CD4-positive, alpha-beta memory T cell (primary cell): ENCODE measurements at regions of chr7 and their contacts with region 1.

Region 1: GRCh38 chr7:154913638-154914312 is 89.1 kb downstream of the PAXIP1 start:
- DNase-seq: peak; percentile 80 to 83 (median 80)
- H3K4me3 ChIP-seq: peak overlapping the region in 1 of 2 donors; percentile 29
- H3K4me3 Mint-ChIP-seq: peak overlapping the region; percentile 84 to 93 (median 88)
- H3K27ac ChIP-seq: no peak overlapping the region
- H3K27ac Mint-ChIP-seq: peak overlapping the region in 3 of 7 donors; percentile 74 to 83 (median 75)
- H3K4me1 ChIP-seq: peaks cover 5% of the 10 kb centered on the region
- H3K4me1 Mint-ChIP-seq: peaks cover 4 to 5% (median 4%) of the 10 kb centered on the region in 4 donors
- H3K27me3 ChIP-seq: no peaks in the 10 kb centered on the region
- H3K27me3 Mint-ChIP-seq: peaks cover 14 to 27% of the 10 kb centered on the region in 2 donors

Region 2: GRCh38 chr7:154903083-154903731 is 10.6 kb before region 1 on chr7:
- CTCF ChIA-PET with region 1: interaction called, 10 read pairs
- POLR2A ChIA-PET with region 1: no interaction called
- intact Hi-C with region 1: no loop called
- DNase-seq: no peak
- H3K4me3 ChIP-seq: no peak overlapping the region
- H3K4me3 Mint-ChIP-seq: no peak overlapping the region
- H3K27ac ChIP-seq: no peak overlapping the region
- H3K27ac Mint-ChIP-seq: no peak overlapping the region
- H3K4me1 ChIP-seq: no peaks in the 10 kb centered on the region
- H3K4me1 Mint-ChIP-seq: peaks cover 0 to 2% (median under 1%) of the 10 kb centered on the region in 4 donors
- H3K27me3 ChIP-seq: no peaks in the 10 kb centered on the region
- H3K27me3 Mint-ChIP-seq: peaks cover 0 to 4% of the 10 kb centered on the region in 2 donors

Region 3: DNA sequence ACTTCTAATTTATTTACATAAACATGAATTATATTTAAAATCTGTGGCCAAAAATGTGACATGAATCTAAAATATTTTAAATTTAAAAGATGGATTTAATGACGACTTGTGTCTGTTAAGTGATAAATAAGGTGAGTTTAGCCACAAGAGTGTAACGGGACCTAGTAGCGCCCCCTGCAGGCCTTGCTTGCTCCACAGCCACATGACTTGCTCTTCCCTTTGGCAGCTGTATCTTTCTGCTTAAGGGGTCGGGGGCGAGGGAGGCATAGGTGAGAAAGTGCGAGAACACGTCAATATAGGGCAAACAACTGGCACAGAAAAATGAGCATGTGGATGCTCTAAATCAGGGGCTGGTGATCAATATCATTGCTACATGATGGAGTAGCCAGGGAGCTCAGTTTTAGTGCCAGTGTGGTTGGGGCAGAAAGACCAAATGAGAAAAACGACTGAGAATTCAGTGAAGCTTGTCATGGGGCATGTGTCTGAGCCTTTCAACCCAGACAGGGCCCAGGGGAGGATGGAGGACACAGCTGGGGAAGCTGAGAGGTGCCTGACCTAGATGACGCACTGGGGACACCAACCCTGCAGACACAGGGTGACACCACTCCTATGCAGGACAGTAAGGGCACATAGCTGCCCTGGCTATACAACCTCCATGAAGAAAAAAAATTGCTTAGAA is 39.4 kb after region 1 on chr7:
- CTCF ChIA-PET with region 1: interaction called, 67 read pairs
- POLR2A ChIA-PET with region 1: interaction called, 4 read pairs
- intact Hi-C with region 1: loop called (anchors 1 kb)
- DNase-seq: peak; percentile 53 to 67 (median 59)
- H3K4me3 ChIP-seq: no peak overlapping the region
- H3K4me3 Mint-ChIP-seq: no peak overlapping the region
- H3K27ac ChIP-seq: no peak overlapping the region
- H3K27ac Mint-ChIP-seq: peak overlapping the region in 1 of 7 donors; percentile 60
- H3K4me1 ChIP-seq: no peaks in the 10 kb centered on the region
- H3K4me1 Mint-ChIP-seq: peaks cover 0 to 4% (median 1%) of the 10 kb centered on the region in 4 donors
- H3K27me3 ChIP-seq: no peaks in the 10 kb centered on the region
- H3K27me3 Mint-ChIP-seq: no peaks in the 10 kb centered on the region

Region 4: DNA sequence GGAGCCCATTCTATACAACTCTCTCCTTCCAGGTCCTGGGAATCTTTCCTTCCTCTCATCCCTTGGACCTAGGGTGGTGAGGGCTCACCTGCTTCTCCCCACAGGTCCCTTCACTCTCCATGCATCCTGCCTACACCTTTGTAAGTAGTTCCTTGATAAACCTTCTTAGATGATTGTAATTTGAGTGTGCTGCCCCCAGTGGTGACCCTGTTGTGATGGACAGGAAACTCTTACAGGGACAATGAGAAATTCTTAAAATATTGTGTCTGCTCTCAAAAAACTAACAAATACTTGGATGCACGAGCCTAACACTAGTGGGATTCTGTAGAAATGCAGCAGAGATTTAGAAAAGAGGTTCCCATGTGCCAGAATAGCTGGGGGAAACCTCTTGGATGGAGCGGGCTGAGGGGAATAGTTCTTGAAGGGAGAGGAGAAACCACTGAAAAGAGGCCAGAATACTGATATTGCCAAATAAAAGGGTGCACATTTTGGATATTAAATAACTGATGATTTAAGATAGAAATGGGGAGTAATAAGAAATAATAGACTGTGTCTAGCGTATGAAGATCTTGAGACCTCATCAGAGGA is 95.9 kb after region 1 on chr7:
- CTCF ChIA-PET with region 1: interaction called, 14 read pairs
- POLR2A ChIA-PET with region 1: no interaction called
- intact Hi-C with region 1: loop called (anchors 5 kb)
- DNase-seq: peak; percentile 10 to 42 (median 23)
- H3K4me3 ChIP-seq: no peak overlapping the region
- H3K4me3 Mint-ChIP-seq: no peak overlapping the region
- H3K27ac ChIP-seq: no peak overlapping the region
- H3K27ac Mint-ChIP-seq: no peak overlapping the region
- H3K4me1 ChIP-seq: peaks cover 4% of the 10 kb centered on the region
- H3K4me1 Mint-ChIP-seq: peaks cover 2 to 10% (median 6%) of the 10 kb centered on the region in 4 donors
- H3K27me3 ChIP-seq: no peaks in the 10 kb centered on the region
- H3K27me3 Mint-ChIP-seq: peaks cover 0 to 2% of the 10 kb centered on the region in 2 donors

Region 5: GRCh38 chr7:155190688-155191087 is 276.9 kb after region 1 on chr7:
- CTCF ChIA-PET with region 1: interaction called, 3 read pairs
- POLR2A ChIA-PET with region 1: no interaction called
- intact Hi-C with region 1: loop called (anchors 1 kb)
- DNase-seq: peak in 4 of 5 donors; percentile 36 to 53 (median 40)
- H3K4me3 ChIP-seq: no peak overlapping the region
- H3K4me3 Mint-ChIP-seq: peak overlapping the region in 1 of 8 donors; percentile 26
- H3K27ac ChIP-seq: no peak overlapping the region
- H3K27ac Mint-ChIP-seq: no peak overlapping the region
- H3K4me1 ChIP-seq: no peaks in the 10 kb centered on the region
- H3K4me1 Mint-ChIP-seq: peaks cover 1 to 7% (median 4%) of the 10 kb centered on the region in 4 donors
- H3K27me3 ChIP-seq: no peaks in the 10 kb centered on the region
- H3K27me3 Mint-ChIP-seq: peaks cover 3 to 18% of the 10 kb centered on the region in 2 donors